ENCODE measurements at regions of chr18 and their contacts with region 1.

Region 1: DNA sequence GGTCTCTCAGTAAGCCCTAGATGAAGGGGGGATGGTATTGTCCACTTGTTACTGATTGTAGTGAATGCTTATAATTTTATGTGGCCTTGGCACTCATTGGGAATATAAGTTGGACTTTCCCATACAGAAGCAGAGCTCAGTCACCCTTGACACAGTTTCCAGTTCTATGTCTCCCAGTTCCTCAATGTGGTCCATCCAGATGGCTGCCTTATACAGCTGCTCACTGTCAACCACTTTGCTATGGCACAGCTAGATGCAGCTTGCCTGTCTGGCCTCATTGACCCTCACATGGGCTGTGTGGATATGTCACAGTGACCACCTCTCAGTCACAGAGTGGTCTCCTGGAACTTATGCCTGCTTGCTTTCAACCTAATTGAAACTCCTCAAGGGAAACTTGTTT is 21.7 kb downstream of the SLC39A6 start:
- DNase-seq: no peak
- H3K4me3 ChIP-seq: no peak overlapping the region
- H3K27ac ChIP-seq: no peak overlapping the region
- H3K4me1 ChIP-seq: no peaks in the 10 kb centered on the region
- H3K27me3 ChIP-seq: no peaks in the 10 kb centered on the region
- CTCF ChIP-seq: no peak
- EP300 ChIP-seq: no peak
- POLR2A ChIP-seq: no peak

Region 2: GRCh38 chr18:36158261-36158867 is 50.9 kb after region 1 on chr18:
- intact Hi-C with region 1: no loop called
- DNase-seq: no peak
- H3K4me3 ChIP-seq: no peak overlapping the region
- H3K27ac ChIP-seq: no peak overlapping the region
- H3K4me1 ChIP-seq: peaks cover 4% of the 10 kb centered on the region
- H3K27me3 ChIP-seq: no peaks in the 10 kb centered on the region
- CTCF ChIP-seq: no peak
- EP300 ChIP-seq: no peak
- POLR2A ChIP-seq: no peak

Region 3: DNA sequence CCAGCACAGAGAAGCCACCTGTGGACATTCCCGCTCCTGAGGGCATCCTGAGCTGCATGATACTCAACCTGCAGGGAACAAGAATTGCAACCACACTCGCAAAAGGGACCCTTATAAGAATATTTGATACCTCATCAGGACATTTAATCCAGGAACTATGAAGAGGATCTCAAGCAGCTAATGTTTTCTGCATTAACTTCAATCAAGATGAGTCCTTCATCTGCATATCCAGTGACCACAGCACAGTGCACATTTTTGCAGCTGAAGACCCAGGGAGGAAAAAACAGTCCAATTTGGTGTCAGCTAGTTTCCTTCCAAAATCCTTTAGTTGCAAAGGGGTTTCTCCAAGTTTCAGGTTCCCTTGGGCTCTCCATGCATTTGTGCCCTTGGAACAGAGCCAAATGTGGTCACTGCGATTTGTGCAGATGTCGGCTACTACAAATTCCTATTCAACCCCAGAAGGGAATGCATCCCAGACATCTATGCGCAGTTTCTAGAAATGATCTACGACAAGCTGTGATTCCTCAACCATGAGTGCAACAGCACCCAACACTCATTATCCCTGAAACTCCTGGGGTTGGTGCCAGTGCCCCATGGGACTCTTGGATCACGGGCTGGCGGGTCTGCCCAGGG is 166.7 kb after region 1 on chr18:
- intact Hi-C with region 1: loop called in 1 of 4 experiments (anchors 5 kb)
- DNase-seq: no peak
- H3K4me3 ChIP-seq: no peak overlapping the region
- H3K27ac ChIP-seq: no peak overlapping the region
- H3K4me1 ChIP-seq: no peaks in the 10 kb centered on the region
- H3K27me3 ChIP-seq: no peaks in the 10 kb centered on the region
- CTCF ChIP-seq: no peak
- EP300 ChIP-seq: no peak
- POLR2A ChIP-seq: no peak

Measured in ovary (tissue), 10 donors.